Common myeloid progenitor, CD34-positive (primary cell): ENCODE measurements at regions of chr3 and their contacts with region 1.

Region 1: GRCh38 chr3:27449530-27450150 is 34.5 kb downstream of the SLC4A7 start:
- DNase-seq: no peak
- H3K4me3 ChIP-seq: no peak overlapping the region
- H3K27ac ChIP-seq: no peak overlapping the region
- H3K4me1 ChIP-seq: peaks cover 0 to 9% (median 5%) of the 10 kb centered on the region in 4 experiments
- H3K27me3 ChIP-seq: no peaks in the 10 kb centered on the region

Region 2: DNA sequence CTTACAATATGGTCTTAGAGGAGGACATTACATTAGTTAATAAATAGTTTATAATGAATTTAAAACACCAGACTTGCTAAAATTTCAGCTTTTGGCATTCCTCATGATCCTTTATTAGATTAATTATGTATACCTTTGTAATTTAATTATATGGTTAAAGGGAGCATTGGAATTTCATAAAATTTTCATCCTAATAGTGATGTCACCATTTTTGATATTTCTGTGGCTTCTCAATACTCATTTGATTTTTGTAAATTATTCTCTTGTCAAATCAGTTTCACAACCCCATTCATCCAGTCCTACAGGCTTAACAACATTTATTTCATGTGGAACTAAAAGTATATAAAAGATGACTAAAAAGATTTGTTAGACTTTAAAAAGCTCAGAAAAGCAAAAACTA is 74.5 kb before region 1 on chr3:
- CTCF ChIA-PET with region 1: no interaction called
- POLR2A ChIA-PET with region 1: no interaction called
- DNase-seq: no peak
- H3K4me3 ChIP-seq: no peak overlapping the region
- H3K27ac ChIP-seq: no peak overlapping the region
- H3K4me1 ChIP-seq: no peaks in the 10 kb centered on the region
- H3K27me3 ChIP-seq: no peaks in the 10 kb centered on the region

Region 3: DNA sequence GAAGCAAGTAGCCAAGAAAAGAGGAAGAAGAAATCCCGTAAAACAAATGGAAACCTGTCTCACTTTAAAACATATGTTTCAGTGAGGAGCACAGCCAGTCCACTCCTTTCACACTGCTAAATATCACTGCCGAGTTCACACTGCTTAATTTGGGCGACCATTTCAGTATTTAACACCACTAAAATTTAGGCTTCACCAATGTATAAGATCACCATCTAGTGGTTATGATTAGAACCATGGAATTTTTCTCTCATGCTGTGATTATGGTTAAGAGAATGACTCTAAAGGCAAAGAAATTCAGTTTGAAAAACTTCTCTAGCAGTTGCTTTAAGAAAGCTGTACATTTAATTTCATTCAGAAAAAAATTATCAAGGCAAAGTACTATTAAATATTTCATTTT is 17.9 kb after region 1 on chr3:
- CTCF ChIA-PET with region 1: interaction called, 11 read pairs
- POLR2A ChIA-PET with region 1: no interaction called
- DNase-seq: peak; percentile 56 to 79 (median 77)
- H3K4me3 ChIP-seq: peak overlapping the region in 1 of 7 experiments; percentile 50
- H3K27ac ChIP-seq: no peak overlapping the region
- H3K4me1 ChIP-seq: peaks cover 0 to 4% (median 2%) of the 10 kb centered on the region in 4 experiments
- H3K27me3 ChIP-seq: no peaks in the 10 kb centered on the region